ENCODE measurements at regions of chr3 and their contacts with region 1.

Region 1: DNA sequence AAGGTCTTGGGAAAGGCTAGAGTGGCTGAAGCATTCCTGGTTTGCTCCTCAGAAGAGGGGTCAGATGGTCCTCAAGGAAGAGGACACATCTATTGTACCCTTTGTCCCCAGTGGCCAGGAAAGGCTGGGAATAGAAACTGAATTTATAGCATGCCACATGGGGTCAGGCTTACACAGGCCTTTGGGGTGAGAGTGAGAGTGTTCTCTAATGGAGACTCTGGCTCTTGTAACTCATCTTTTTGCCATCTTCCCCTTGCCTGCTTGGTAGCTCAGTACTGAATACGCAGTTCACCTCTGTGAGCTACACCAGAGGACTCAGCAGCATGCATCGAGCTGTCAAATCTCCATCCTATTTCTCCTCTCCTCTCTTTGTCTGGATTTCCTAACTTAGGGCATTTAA is 87.5 kb downstream of the ATP2B2 start:
- DNase-seq: peak; percentile 23
- H3K4me3 Mint-ChIP-seq: no peak overlapping the region
- H3K27ac Mint-ChIP-seq: no peak overlapping the region
- H3K4me1 Mint-ChIP-seq: no peaks in the 10 kb centered on the region
- H3K27me3 Mint-ChIP-seq: peaks cover 89% of the 10 kb centered on the region
- CTCF ChIP-seq: no peak

Region 2: DNA sequence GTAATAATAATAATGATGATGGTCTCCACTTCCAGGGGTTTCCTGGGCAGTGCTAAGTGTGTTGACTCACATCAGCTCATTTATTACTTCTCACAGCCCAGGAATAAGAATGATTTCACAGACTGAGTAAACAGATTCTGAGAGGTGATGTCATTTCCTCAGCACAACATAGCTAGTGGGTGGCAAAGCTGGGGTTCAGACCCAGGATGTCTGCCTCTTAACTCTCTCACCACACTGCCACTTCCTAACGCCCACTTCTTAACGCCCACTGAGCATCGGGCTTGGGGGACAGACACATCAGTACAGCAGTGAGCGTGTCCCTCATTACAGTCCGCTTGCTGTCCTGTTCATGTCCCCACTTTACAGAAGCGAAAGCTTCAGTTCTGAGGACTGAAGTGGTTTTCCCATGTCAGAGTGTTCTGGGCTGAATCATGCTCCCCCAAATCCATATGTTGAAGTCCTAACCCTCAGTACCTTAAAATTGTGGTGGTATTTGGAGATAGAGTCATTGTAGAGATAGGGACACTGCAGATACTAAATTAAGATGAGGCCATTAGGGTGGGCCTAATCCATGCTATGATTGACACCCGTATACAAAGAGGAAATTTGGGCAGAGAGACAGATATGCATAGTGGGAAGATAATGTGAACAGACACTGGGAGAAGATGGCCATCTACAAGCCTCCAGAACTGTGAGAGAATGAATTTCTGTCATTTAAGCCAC is 19.6 kb after region 1 on chr3:
- CTCF ChIA-PET with region 1: no interaction called
- intact Hi-C with region 1: no loop called
- DNase-seq: no peak
- H3K4me3 Mint-ChIP-seq: no peak overlapping the region
- H3K27ac Mint-ChIP-seq: no peak overlapping the region
- H3K4me1 Mint-ChIP-seq: no peaks in the 10 kb centered on the region
- H3K27me3 Mint-ChIP-seq: peaks cover 35% of the 10 kb centered on the region
- CTCF ChIP-seq: no peak

Region 3: GRCh38 chr3:10619989-10620832 is 202.4 kb after region 1 on chr3:
- CTCF ChIA-PET with region 1: no interaction called
- intact Hi-C with region 1: loop called (anchors 5 kb)
- DNase-seq: no peak
- H3K4me3 Mint-ChIP-seq: no peak overlapping the region
- H3K27ac Mint-ChIP-seq: no peak overlapping the region
- H3K4me1 Mint-ChIP-seq: no peaks in the 10 kb centered on the region
- H3K27me3 Mint-ChIP-seq: peaks cover 100% of the 10 kb centered on the region
- CTCF ChIP-seq: no peak

Region 4: GRCh38 chr3:10738688-10739372 is 321.0 kb after region 1 on chr3:
- CTCF ChIA-PET with region 1: interaction called, 9 read pairs
- intact Hi-C with region 1: loop called (anchors 1 kb)
- DNase-seq: peak; percentile 70
- H3K4me3 Mint-ChIP-seq: no peak overlapping the region
- H3K27ac Mint-ChIP-seq: no peak overlapping the region
- H3K4me1 Mint-ChIP-seq: no peaks in the 10 kb centered on the region
- H3K27me3 Mint-ChIP-seq: peaks cover 83% of the 10 kb centered on the region
- CTCF ChIP-seq: peak; percentile 78